ENCODE measurements at regions of chr3 and their contacts with region 1.

Region 1: GRCh38 chr3:130548356-130548755 is 31.4 kb downstream of the COL6A6 start:
- DNase-seq: no peak
- ATAC-seq: no peak
- H3K4me3 ChIP-seq: no peak overlapping the region
- H3K4me3 Mint-ChIP-seq: no peak overlapping the region
- H3K27ac ChIP-seq: no peak overlapping the region
- H3K27ac Mint-ChIP-seq: no peak overlapping the region
- H3K4me1 ChIP-seq: no peaks in the 10 kb centered on the region
- H3K4me1 Mint-ChIP-seq: no peaks in the 10 kb centered on the region
- H3K27me3 ChIP-seq: no peaks in the 10 kb centered on the region
- H3K27me3 Mint-ChIP-seq: peaks cover 10% of the 10 kb centered on the region
- CTCF ChIP-seq: no peak

Region 2: GRCh38 chr3:130433306-130433705 is 115.0 kb before region 1 on chr3:
- CTCF ChIA-PET with region 1: no interaction called
- POLR2A ChIA-PET with region 1: no interaction called
- intact Hi-C with region 1: no loop called
- DNase-seq: no peak
- ATAC-seq: no peak
- H3K4me3 ChIP-seq: no peak overlapping the region
- H3K4me3 Mint-ChIP-seq: no peak overlapping the region
- H3K27ac ChIP-seq: no peak overlapping the region
- H3K27ac Mint-ChIP-seq: no peak overlapping the region
- H3K4me1 ChIP-seq: no peaks in the 10 kb centered on the region
- H3K4me1 Mint-ChIP-seq: no peaks in the 10 kb centered on the region
- H3K27me3 ChIP-seq: no peaks in the 10 kb centered on the region
- H3K27me3 Mint-ChIP-seq: peaks cover 11% of the 10 kb centered on the region
- CTCF ChIP-seq: no peak

Region 3: GRCh38 chr3:130529513-130530215 is 18.7 kb before region 1 on chr3:
- CTCF ChIA-PET with region 1: no interaction called
- POLR2A ChIA-PET with region 1: no interaction called
- intact Hi-C with region 1: no loop called
- DNase-seq: no peak
- ATAC-seq: no peak
- H3K4me3 ChIP-seq: no peak overlapping the region
- H3K4me3 Mint-ChIP-seq: no peak overlapping the region
- H3K27ac ChIP-seq: no peak overlapping the region
- H3K27ac Mint-ChIP-seq: peak overlapping the region; percentile 22
- H3K4me1 ChIP-seq: peaks cover 9% of the 10 kb centered on the region
- H3K4me1 Mint-ChIP-seq: peaks cover 15% of the 10 kb centered on the region
- H3K27me3 ChIP-seq: no peaks in the 10 kb centered on the region
- H3K27me3 Mint-ChIP-seq: peaks cover 4% of the 10 kb centered on the region
- CTCF ChIP-seq: no peak

Region 4: GRCh38 chr3:130582457-130583153 is 34.2 kb after region 1 on chr3:
- CTCF ChIA-PET with region 1: no interaction called
- POLR2A ChIA-PET with region 1: no interaction called
- intact Hi-C with region 1: loop called in 1 of 2 experiments (anchors 1 kb)
- DNase-seq: no peak
- ATAC-seq: no peak
- H3K4me3 ChIP-seq: no peak overlapping the region
- H3K4me3 Mint-ChIP-seq: no peak overlapping the region
- H3K27ac ChIP-seq: no peak overlapping the region
- H3K27ac Mint-ChIP-seq: no peak overlapping the region
- H3K4me1 ChIP-seq: no peaks in the 10 kb centered on the region
- H3K4me1 Mint-ChIP-seq: no peaks in the 10 kb centered on the region
- H3K27me3 ChIP-seq: no peaks in the 10 kb centered on the region
- H3K27me3 Mint-ChIP-seq: peaks cover 15% of the 10 kb centered on the region
- CTCF ChIP-seq: no peak

Measured in CD8-positive, alpha-beta T cell (primary cell).